H1 (cell line): ENCODE measurements at regions of chr9 and their contacts with region 1.

Region 1: DNA sequence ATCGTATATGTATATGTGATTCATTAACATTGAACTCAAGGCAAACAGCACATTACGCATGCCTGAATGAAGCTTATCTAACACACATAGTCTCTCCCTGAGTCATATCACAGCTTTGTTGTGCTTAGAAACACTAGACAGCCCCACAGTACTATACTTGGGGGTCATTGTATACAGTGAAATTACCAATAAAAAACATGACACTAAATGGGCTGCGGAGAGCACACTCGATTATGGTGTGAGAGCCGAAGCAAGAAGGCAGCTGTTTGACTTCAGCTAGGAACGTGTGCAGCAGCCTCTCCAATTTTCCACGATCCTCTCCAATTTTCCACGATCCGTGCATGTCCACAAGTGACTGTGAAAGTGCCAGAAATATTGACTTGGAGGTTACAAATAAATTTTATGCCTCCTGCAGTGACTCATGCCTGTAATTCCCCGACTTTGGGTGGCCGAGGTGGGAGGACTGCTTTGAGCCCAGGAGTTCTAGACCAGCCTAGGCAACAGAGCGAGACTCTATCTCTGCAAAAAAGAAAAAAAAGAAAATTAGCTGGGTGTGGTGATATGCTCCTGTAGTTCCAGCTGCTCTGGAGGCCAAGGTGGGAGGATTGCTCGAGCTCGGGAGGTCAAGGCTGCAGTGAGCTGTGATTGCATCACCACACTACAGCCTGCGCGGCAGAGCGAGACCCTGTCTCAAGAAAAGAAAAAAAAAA is 102.4 kb downstream of the DAPK1 start:
- DNase-seq: no peak
- H3K4me3 ChIP-seq: no peak overlapping the region
- H3K27ac ChIP-seq: no peak overlapping the region
- H3K4me1 ChIP-seq: peaks cover 5 to 10% (median 9%) of the 10 kb centered on the region in 4 experiments
- H3K27me3 ChIP-seq: no peaks in the 10 kb centered on the region
- CTCF ChIP-seq: no peak
- EP300 ChIP-seq: no peak
- POLR2A ChIP-seq: no peak
- RAD21 ChIP-seq: no peak

Region 2: DNA sequence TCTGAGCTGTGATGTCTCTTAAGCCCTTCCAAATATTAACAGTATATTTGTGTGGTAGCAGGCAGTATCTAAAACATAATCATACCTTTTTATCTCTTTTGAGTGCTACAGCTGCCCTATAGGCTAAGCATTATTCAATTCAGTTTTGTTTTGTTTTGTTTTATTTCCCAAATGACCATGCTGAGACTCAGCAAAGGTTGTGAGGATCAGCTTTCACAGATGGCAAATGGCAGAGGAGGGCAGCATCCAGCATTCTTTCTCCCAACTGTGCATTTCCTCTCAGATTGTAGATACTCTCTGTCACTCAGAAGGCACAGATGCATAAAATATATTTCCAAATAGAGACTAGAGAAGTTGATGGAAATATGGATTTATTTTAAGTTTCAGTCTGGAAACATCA is 11.7 kb before region 1 on chr9:
- CTCF ChIA-PET with region 1: interaction called, 5 read pairs
- POLR2A ChIA-PET with region 1: interaction called, 10 read pairs
- DNase-seq: no peak
- H3K4me3 ChIP-seq: no peak overlapping the region
- H3K27ac ChIP-seq: no peak overlapping the region
- H3K4me1 ChIP-seq: peaks cover 2 to 8% (median 5%) of the 10 kb centered on the region in 4 experiments; a peak in 5 of 7 replicates
- H3K27me3 ChIP-seq: no peaks in the 10 kb centered on the region
- CTCF ChIP-seq: no peak
- EP300 ChIP-seq: no peak
- POLR2A ChIP-seq: no peak
- RAD21 ChIP-seq: no peak

Region 3: GRCh38 chr9:87701931-87702421 is 101.9 kb after region 1 on chr9:
- CTCF ChIA-PET with region 1: no interaction called
- POLR2A ChIA-PET with region 1: no interaction called
- DNase-seq: no peak
- H3K4me3 ChIP-seq: no peak overlapping the region
- H3K27ac ChIP-seq: no peak overlapping the region
- H3K4me1 ChIP-seq: 0 out of 7 replicates have a peak, but pooled peaks cover 0 to 4% (median 0%) of the 10 kb centered on the region in 4 experiments
- H3K27me3 ChIP-seq: no peaks in the 10 kb centered on the region
- CTCF ChIP-seq: no peak
- EP300 ChIP-seq: no peak
- POLR2A ChIP-seq: no peak
- RAD21 ChIP-seq: no peak